ENCODE measurements at regions of chr17 and their contacts with region 1.

Region 1: DNA sequence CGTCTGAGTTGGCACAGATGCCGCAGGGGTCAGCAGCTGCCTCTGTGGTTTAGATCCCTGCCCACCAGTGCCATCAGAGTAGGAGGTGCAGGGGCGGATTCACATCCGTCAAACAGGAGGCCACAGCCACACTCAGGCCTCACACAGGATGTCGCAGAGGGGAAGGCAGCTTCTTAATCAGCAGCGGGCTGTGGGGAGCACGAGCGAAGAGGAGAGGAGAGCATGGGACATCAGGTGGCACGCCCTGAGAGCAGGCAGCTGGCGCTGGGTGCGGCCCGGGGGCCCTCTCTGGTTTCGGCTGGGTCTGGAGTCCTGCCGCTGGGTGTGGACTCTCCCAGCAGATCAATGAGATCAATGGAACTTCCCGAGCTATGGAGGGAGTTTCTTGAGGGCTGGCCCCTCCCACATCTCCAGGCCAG is 9.6 kb downstream of the LLGL2 start:
- DNase-seq: peak; percentile 30 to 87 (median 67)
- ATAC-seq: peak; percentile 96
- H3K4me3 ChIP-seq: peak overlapping the region; percentile 7 to 27
- H3K4me3 Mint-ChIP-seq: peak overlapping the region; percentile 76
- H3K27ac ChIP-seq: peak overlapping the region; percentile 59 to 73
- H3K27ac Mint-ChIP-seq: peak overlapping the region; percentile 93
- H3K4me1 ChIP-seq: peaks cover 18% of the 10 kb centered on the region
- H3K4me1 Mint-ChIP-seq: peaks cover 22% of the 10 kb centered on the region
- H3K27me3 ChIP-seq: no peaks in the 10 kb centered on the region
- H3K27me3 Mint-ChIP-seq: no peaks in the 10 kb centered on the region
- CTCF ChIP-seq: no peak

Region 2: GRCh38 chr17:75417054-75417580 is 118.0 kb before region 1 on chr17:
- CTCF ChIA-PET with region 1: no interaction called
- POLR2A ChIA-PET with region 1: no interaction called
- intact Hi-C with region 1: no loop called
- DNase-seq: no peak
- ATAC-seq: no peak
- H3K4me3 ChIP-seq: no peak overlapping the region
- H3K4me3 Mint-ChIP-seq: no peak overlapping the region
- H3K27ac ChIP-seq: no peak overlapping the region
- H3K27ac Mint-ChIP-seq: no peak overlapping the region
- H3K4me1 ChIP-seq: peaks cover 4% of the 10 kb centered on the region
- H3K4me1 Mint-ChIP-seq: peaks cover 6% of the 10 kb centered on the region
- H3K27me3 ChIP-seq: no peaks in the 10 kb centered on the region
- H3K27me3 Mint-ChIP-seq: no peaks in the 10 kb centered on the region
- CTCF ChIP-seq: no peak

Region 3: DNA sequence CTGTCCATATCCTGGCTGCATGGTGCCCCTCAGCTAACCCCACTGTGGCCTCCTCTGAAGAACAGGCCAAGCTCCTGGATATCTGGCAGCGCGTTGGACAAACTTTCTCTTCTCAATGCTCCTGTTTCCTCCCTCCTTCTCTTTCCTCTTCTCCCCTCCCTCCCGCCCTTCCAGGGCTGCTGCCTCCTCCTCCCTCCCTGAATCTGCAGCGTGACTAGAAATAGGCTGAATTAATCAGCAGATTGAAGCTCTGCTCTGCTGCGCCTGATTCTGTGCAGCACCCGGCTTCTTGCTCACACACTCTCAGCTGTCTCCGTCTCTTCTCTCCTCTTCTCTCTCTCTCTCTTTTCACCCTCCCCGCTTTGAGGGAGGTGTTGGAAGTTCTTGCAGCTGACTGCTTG is 58.9 kb before region 1 on chr17:
- CTCF ChIA-PET with region 1: no interaction called
- POLR2A ChIA-PET with region 1: no interaction called
- intact Hi-C with region 1: no loop called
- DNase-seq: no peak
- ATAC-seq: no peak
- H3K4me3 ChIP-seq: no peak overlapping the region
- H3K4me3 Mint-ChIP-seq: no peak overlapping the region
- H3K27ac ChIP-seq: no peak overlapping the region
- H3K27ac Mint-ChIP-seq: no peak overlapping the region
- H3K4me1 ChIP-seq: no peaks in the 10 kb centered on the region
- H3K4me1 Mint-ChIP-seq: no peaks in the 10 kb centered on the region
- H3K27me3 ChIP-seq: no peaks in the 10 kb centered on the region
- H3K27me3 Mint-ChIP-seq: no peaks in the 10 kb centered on the region
- CTCF ChIP-seq: no peak

Region 4: DNA sequence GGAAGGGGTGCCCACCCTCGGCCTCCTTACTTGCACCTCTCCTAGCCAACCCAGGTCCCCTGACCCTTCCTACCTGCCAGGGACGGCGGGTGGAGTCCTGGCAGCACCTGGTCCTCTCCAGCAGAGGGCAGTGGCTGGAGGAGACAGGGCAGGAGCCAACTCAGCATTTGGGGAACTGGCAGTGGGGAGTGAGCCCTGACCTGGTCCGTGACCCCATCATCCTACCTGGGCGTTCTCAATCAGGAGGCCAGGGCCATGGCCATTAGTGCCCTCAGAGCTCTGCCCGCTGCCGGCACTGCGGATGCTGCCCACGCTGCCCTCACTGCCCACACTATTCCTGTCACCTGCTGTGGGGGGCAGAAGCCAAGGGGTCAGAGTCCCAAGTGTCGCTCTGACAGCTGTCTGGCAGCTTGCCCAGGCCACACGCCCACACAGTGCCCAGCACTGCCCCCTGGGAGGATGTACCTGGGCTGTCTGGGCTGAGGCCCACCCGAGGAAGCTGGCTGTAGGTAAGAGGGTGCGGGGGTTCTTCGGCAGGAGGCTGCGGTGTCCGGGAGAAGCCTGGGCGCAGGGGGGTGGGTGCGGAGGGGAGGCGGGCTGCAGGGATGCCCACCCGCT is 30.7 kb before region 1 on chr17:
- CTCF ChIA-PET with region 1: no interaction called
- POLR2A ChIA-PET with region 1: no interaction called
- intact Hi-C with region 1: loop called in 1 of 2 experiments (anchors 5 kb)
- DNase-seq: peak in 6 of 9 experiments; percentile 48 to 70 (median 58)
- ATAC-seq: peak; percentile 71
- H3K4me3 ChIP-seq: no peak overlapping the region
- H3K4me3 Mint-ChIP-seq: no peak overlapping the region
- H3K27ac ChIP-seq: no peak overlapping the region
- H3K27ac Mint-ChIP-seq: no peak overlapping the region
- H3K4me1 ChIP-seq: peaks cover 6% of the 10 kb centered on the region
- H3K4me1 Mint-ChIP-seq: no peaks in the 10 kb centered on the region
- H3K27me3 ChIP-seq: no peaks in the 10 kb centered on the region
- H3K27me3 Mint-ChIP-seq: no peaks in the 10 kb centered on the region
- CTCF ChIP-seq: peak; percentile 50

Measured in CD8-positive, alpha-beta T cell (primary cell).